ENCODE measurements at regions of chr2 and their contacts with region 1.

Region 1: DNA sequence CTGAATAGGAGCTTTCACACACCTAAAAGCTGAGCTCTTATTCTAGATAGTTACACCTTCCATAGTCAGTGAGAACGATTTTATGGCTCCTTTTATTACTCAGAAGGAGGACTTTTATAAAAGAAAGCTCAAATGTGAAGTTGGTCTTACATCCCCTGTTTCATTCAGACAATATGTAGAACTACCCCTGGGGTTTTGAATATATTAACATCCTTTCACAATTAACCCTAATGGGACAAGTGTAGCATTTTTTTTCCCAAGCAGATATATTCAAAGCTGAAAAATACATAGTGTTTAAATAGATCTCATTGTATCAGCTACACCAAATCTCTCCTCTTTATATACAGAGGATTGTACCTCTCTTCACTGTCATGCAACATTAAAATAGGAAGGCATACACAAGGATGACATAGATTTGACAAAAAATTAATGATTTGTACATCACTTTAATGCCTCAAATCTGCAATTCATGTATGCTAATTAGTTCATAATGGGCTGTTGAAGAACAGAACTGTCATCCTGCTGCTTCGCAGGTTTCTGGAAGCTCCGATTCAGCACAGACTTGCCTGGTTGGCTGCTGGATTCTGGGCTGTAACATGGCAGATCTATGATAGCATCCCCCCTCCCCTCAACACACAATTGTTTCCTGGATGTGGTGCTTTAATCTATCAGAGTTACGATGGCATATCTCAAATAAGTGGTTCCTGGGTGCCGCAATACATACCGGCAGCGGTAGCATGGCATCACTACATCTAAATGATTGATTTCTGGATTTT is 129.7 kb upstream of the PARD3B start:
- DNase-seq: no peak
- H3K4me3 Mint-ChIP-seq: no peak overlapping the region
- H3K27ac Mint-ChIP-seq: no peak overlapping the region
- H3K4me1 Mint-ChIP-seq: no peaks in the 10 kb centered on the region
- H3K27me3 Mint-ChIP-seq: peaks cover 8% of the 10 kb centered on the region

Region 2: GRCh38 chr2:204039298-204039838 is 376.2 kb before region 1 on chr2:
- CTCF ChIA-PET with region 1: no interaction called
- POLR2A ChIA-PET with region 1: no interaction called
- intact Hi-C with region 1: loop called (anchors 5 kb)
- DNase-seq: no peak
- H3K4me3 Mint-ChIP-seq: no peak overlapping the region
- H3K27ac Mint-ChIP-seq: no peak overlapping the region
- H3K4me1 Mint-ChIP-seq: peaks cover under 1% of the 10 kb centered on the region
- H3K27me3 Mint-ChIP-seq: peaks cover 2% of the 10 kb centered on the region

Region 3: DNA sequence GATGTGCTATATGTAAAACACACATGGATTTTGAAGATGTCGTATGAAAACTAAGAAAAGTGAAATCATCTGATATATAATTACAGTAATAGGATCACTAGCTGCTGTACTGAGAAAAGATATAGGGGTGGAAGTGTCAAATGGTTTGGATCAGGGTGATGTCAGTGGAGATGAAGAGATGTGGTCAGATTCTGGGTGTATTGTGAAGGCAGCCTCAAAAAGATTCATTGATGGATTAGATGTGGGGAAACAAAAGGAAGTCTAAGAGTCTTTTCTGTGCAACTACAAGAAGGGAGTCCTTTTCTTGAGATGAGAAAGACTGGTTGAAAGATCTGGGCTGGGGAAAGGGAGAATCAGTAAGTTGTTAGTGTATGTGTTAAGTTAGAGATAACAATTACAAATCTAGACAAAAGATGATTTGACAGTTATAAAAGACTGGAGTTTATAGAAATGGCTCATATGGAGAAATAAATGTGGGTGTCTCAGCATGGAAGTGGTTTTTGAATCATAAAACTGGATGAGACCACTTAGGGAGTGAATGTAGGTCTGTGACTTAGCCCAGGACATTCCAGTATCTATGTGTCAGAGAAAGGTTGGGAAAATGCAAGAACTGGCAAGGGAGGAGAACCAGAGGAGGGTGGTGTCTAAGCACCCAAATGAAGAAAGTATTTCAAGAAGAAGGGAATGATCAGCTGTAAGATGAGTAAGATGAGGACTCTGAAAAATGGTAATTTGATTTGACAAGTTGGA is 477.1 kb after region 1 on chr2:
- CTCF ChIA-PET with region 1: no interaction called
- POLR2A ChIA-PET with region 1: no interaction called
- intact Hi-C with region 1: no loop called
- DNase-seq: no peak
- H3K4me3 Mint-ChIP-seq: no peak overlapping the region
- H3K27ac Mint-ChIP-seq: no peak overlapping the region
- H3K4me1 Mint-ChIP-seq: peaks cover 2% of the 10 kb centered on the region
- H3K27me3 Mint-ChIP-seq: no peaks in the 10 kb centered on the region

Measured in activated CD4-positive, alpha-beta memory T cell treated with anti-CD3 and anti-CD28 coated beads for 36 hours (primary cell).